ENCODE measurements at regions of chr7 and their contacts with region 1.

Region 1: GRCh38 chr7:154953006-154953684 is 49.8 kb downstream of the PAXIP1 start:
- DNase-seq: no peak
- ATAC-seq: peak; percentile 87
- H3K4me3 ChIP-seq: no peak overlapping the region
- H3K27ac ChIP-seq: no peak overlapping the region
- H3K4me1 ChIP-seq: no peaks in the 10 kb centered on the region
- H3K27me3 ChIP-seq: no peaks in the 10 kb centered on the region
- CTCF ChIP-seq: peak; percentile 54 to 68 (median 63)
- EP300 ChIP-seq: no peak
- POLR2A ChIP-seq: no peak
- RAD21 ChIP-seq: 0 out of 2 replicates have a peak, but pooled peaks have one; percentile 25

Region 2: GRCh38 chr7:154942691-154943090 is 10.5 kb before region 1 on chr7:
- CTCF ChIA-PET with region 1: interaction called, 27 read pairs
- POLR2A ChIA-PET with region 1: interaction called, 3 read pairs
- RAD21 ChIA-PET with region 1: interaction called, 4 read pairs
- SMC1A ChIA-PET with region 1: interaction called, 12 read pairs
- in situ Hi-C with region 1: no loop called
- intact Hi-C with region 1: no loop called
- DNase-seq: no peak
- ATAC-seq: no peak
- H3K4me3 ChIP-seq: no peak overlapping the region
- H3K27ac ChIP-seq: no peak overlapping the region
- H3K4me1 ChIP-seq: no peaks in the 10 kb centered on the region
- H3K27me3 ChIP-seq: no peaks in the 10 kb centered on the region
- CTCF ChIP-seq: no peak
- EP300 ChIP-seq: no peak
- POLR2A ChIP-seq: no peak
- RAD21 ChIP-seq: no peak

Region 3: DNA sequence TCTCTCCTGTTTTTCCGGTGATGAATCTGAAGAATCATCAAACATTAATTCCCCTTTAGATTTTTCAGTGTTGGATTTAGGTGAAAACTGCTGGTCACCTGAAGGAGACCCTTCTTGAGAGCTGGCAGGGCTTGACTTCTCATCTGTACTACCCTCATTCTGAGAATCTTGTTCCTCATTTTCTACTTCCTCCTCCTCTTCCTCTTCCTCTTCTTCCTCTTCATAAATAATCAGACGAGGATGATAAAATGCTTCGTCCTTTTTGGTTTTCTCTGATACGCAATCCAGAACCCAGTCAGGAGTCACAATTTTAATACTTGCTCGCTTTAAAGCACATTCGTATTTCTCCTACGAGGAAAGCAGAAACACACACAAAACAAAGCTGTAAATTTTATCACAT is 22.8 kb after region 1 on chr7:
- CTCF ChIA-PET with region 1: interaction called, 10 read pairs
- POLR2A ChIA-PET with region 1: interaction called, 3 read pairs
- RAD21 ChIA-PET with region 1: no interaction called
- SMC1A ChIA-PET with region 1: interaction called, 4 read pairs
- in situ Hi-C with region 1: no loop called
- intact Hi-C with region 1: no loop called
- DNase-seq: no peak
- ATAC-seq: no peak
- H3K4me3 ChIP-seq: no peak overlapping the region
- H3K27ac ChIP-seq: no peak overlapping the region
- H3K4me1 ChIP-seq: no peaks in the 10 kb centered on the region
- H3K27me3 ChIP-seq: no peaks in the 10 kb centered on the region
- CTCF ChIP-seq: no peak
- EP300 ChIP-seq: no peak
- POLR2A ChIP-seq: no peak
- RAD21 ChIP-seq: no peak

Measured in GM12878 (cell line).